Aorta (tissue), 5 donors: ENCODE measurements at regions of chr12 and their contacts with region 1.

Region 1: DNA sequence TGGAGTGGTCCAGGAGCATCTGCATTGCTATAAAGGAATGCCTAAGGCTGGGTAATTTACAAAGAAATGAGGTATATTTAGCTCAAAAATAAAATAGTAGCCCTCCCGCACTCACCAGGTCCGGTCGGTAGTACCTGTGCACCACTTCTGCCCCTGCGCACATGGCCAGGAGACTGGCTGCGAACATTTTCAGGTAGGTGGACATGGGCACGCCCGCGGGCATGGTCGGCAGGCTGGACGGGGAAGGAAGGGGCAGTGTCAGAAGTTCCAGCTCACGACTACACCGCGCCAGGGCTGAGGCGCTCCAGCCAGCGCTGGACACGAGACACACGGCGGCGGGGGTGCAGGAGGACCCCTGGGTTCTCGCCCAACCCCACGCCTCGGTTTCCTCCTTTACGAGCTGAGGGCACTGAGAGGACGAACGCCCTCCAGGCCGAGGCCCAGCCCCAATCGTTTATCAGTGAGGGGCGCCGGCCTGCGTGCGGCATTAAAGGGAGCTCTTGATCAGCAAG is 9.1 kb upstream of the TDG start:
- DNase-seq: no peak
- ATAC-seq: peak; percentile 70
- H3K4me3 ChIP-seq: peak overlapping the region; percentile 56 to 76
- H3K27ac ChIP-seq: peak overlapping the region in 1 of 2 donors; percentile 54
- H3K4me1 ChIP-seq: no peaks in the 10 kb centered on the region
- H3K27me3 ChIP-seq: no peaks in the 10 kb centered on the region

Region 2: DNA sequence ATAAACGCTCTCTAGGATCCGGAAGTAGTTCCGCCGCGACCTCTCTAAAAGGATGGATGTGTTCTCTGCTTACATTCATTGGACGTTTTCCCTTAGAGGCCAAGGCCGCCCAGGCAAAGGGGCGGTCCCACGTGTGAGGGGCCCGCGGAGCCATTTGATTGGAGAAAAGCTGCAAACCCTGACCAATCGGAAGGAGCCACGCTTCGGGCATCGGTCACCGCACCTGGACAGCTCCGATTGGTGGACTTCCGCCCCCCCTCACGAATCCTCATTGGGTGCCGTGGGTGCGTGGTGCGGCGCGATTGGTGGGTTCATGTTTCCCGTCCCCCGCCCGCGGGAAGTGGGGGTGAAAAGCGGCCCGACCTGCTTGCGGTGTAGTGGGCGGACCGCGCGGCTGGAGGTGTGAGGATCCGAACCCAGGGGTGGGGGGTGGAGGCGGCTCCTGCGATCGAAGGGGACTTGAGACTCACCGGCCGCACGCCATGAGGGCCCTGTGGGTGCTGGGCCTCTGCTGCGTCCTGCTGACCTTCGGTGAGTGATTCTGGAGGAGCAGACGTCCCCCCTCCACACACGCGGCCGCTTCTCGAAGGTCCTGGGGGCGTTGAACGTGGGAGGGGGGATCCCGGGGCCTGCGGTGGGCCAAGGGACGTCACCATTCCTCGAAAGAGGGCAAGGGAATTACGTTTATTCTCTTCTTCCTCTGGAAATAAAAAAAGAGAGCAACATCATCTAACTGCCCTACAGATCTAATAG is 26.4 kb before region 1 on chr12 and contains the start of gene HSP90B1:
- intact Hi-C with region 1: loop called in 1 of 2 experiments (anchors 1 kb)
- DNase-seq: peak; percentile 99 to 100
- ATAC-seq: peak; percentile 96
- H3K4me3 ChIP-seq: peak within 1 kb of the TSS; percentile 78 to 80
- H3K27ac ChIP-seq: peak within 1 kb of the TSS; percentile 68 to 97
- H3K4me1 ChIP-seq: peaks cover 0 to 6% of the 10 kb centered on the region in 2 donors
- H3K27me3 ChIP-seq: no peaks in the 10 kb centered on the region
- total RNA-seq, gene HSP90B1: 641 to 818 TPM

Region 3: DNA sequence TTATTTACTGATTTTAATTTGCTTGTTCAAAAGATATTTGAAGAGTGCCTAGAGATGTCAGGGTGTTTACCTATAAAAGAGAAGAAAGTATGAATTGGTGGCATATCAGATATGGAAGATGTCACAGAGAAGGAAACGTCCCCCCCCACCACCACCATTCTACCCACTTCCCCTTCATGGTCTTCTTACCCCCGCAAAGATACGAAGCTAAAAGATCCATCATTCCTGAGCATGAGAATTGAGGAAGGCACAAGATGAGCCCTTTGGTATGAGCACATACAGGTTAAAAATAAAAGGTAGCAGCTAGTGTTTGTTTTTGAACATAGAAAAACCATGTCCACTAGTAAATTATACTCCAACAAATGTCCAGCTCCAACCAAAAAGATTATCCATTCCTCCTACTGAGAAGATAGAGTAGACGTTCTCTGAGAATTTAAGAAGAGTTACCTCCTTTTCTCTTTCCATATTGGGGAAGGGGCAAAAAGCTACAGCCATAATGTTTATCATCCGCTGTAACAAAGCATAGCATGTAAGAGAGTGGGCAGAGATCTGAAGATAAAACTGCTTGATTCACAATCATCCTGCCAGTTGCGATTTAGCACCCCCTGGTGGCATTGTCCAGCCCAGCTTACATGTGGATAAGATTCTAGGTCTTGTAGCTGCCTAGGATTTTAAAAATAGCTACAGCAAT is 152.3 kb after region 1 on chr12:
- intact Hi-C with region 1: loop called in 1 of 2 experiments (anchors 10 kb)
- DNase-seq: peak; percentile 89 to 92
- ATAC-seq: peak; percentile 86
- H3K4me3 ChIP-seq: no peak overlapping the region
- H3K27ac ChIP-seq: no peak overlapping the region
- H3K4me1 ChIP-seq: no peaks in the 10 kb centered on the region
- H3K27me3 ChIP-seq: no peaks in the 10 kb centered on the region